GM23248 (cell line): ENCODE measurements at regions of chr3 and their contacts with region 1.

Region 1: GRCh38 chr3:192816351-192816750 is 89.0 kb upstream of the FGF12 start:
- DNase-seq: peak; percentile 77
- H3K4me3 ChIP-seq: no peak overlapping the region
- H3K27ac ChIP-seq: peak overlapping the region; percentile 25; the same call in 1 of the 2 replicates
- H3K4me1 ChIP-seq: peaks cover 37% of the 10 kb centered on the region
- H3K27me3 ChIP-seq: no peaks in the 10 kb centered on the region

Region 2: GRCh38 chr3:192259661-192260060 is 556.7 kb before region 1 on chr3:
- in situ Hi-C with region 1: no loop called
- DNase-seq: no peak
- H3K4me3 ChIP-seq: no peak overlapping the region
- H3K27ac ChIP-seq: no peak overlapping the region
- H3K4me1 ChIP-seq: no peaks in the 10 kb centered on the region
- H3K27me3 ChIP-seq: no peaks in the 10 kb centered on the region

Region 3: GRCh38 chr3:193040836-193041672 is 224.7 kb after region 1 on chr3:
- in situ Hi-C with region 1: loop called (anchors 5 kb)
- DNase-seq: peak; percentile 61
- H3K4me3 ChIP-seq: no peak overlapping the region
- H3K27ac ChIP-seq: no peak overlapping the region
- H3K4me1 ChIP-seq: no peaks in the 10 kb centered on the region
- H3K27me3 ChIP-seq: no peaks in the 10 kb centered on the region

Region 4: GRCh38 chr3:193262709-193263108 is 446.4 kb after region 1 on chr3:
- in situ Hi-C with region 1: no loop called
- DNase-seq: no peak
- H3K4me3 ChIP-seq: no peak overlapping the region
- H3K27ac ChIP-seq: no peak overlapping the region
- H3K4me1 ChIP-seq: no peaks in the 10 kb centered on the region
- H3K27me3 ChIP-seq: no peaks in the 10 kb centered on the region

Region 5: DNA sequence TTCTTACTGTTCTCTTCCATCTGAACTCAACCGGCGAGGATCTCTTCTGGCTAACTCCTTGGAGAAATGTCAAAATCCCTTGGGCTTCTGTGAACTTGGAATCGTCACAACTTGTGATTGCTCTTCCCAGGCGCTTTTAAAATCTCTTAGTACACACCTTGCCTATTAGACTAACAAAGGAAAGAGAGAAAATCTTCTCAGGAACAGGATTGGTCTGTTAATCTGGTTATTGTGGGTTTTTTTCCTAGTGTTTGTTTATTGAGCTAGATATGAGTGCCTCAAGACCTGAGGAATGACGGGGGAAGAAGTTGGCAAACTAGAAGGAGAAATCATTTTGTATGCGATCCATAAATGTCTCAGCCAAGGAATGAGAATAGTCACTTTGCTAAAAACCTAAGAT is 562.4 kb after region 1 on chr3 and contains the start of gene ATP13A5:
- in situ Hi-C with region 1: no loop called
- DNase-seq: no peak
- H3K4me3 ChIP-seq: no peak within 1 kb of the TSS
- H3K27ac ChIP-seq: no peak within 1 kb of the TSS
- H3K4me1 ChIP-seq: no peaks in the 10 kb centered on the region
- H3K27me3 ChIP-seq: no peaks in the 10 kb centered on the region
- total RNA-seq, gene ATP13A5: not detected in 2 replicates